Aorta (tissue), 5 donors: ENCODE measurements at regions of chr5 and their contacts with region 1.

Region 1: DNA sequence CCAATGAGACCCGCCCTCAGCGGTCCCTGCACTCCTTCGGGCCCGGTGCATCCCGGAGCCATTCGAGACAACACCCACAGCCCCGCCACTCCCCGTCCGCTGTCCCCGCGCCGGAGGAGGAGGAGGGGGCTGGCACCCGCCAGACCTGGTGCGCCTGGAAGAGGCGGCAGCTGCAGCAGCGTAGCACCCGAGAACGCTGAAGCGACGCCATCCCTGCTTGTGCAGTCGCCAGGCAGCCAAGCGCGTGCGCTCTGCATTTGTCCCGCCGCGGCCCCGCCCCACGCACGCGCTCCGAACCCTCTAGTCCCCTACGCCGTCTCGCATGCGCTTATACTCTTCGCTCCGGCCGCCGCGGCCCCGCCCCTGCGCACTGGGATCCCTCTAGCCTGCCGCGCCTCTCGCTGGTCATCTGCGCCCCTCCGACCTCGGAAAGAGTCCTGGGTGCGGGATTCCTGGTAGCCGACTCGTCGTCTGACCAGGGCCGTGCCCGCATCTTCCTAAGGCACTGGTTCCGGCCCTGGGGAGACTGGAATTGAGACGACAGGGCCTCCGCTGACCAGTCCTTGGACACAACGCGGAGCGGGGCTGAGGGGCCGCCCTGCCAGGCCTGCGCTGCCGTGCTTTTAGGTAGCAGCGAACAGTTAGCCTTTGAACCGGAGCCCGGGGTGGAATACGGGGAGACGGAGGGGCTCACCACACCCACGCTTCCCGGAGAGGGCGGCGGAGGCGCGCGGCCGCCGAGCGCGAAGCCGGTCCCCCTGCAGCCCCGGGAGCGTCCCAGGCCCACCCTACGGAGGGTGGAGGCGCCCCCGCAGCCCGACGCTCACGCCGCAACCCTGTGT is at the start of gene MRNIP:
- DNase-seq: peak; percentile 99 to 100
- ATAC-seq: peak; percentile 99
- H3K4me3 ChIP-seq: peak within 1 kb of the TSS; percentile 53
- H3K27ac ChIP-seq: peak within 1 kb of the TSS in 1 of 2 donors; percentile 62
- H3K4me1 ChIP-seq: no peaks in the 10 kb centered on the region
- H3K27me3 ChIP-seq: no peaks in the 10 kb centered on the region
- total RNA-seq, gene MRNIP: 22.9 to 46.6 TPM

Region 2: GRCh38 chr5:179806250-179807222 is 52.3 kb before region 1 on chr5 and contains the start of gene MGAT4B:
- intact Hi-C with region 1: loop called in 1 of 2 experiments (anchors 10 kb)
- DNase-seq: peak; percentile 87 to 91
- ATAC-seq: peak; percentile 92
- H3K4me3 ChIP-seq: peak within 1 kb of the TSS; percentile 98
- H3K27ac ChIP-seq: peak within 1 kb of the TSS; percentile 68 to 79
- H3K4me1 ChIP-seq: peaks cover 0 to 2% of the 10 kb centered on the region in 2 donors
- H3K27me3 ChIP-seq: no peaks in the 10 kb centered on the region
- total RNA-seq, gene MGAT4B: 56.0 to 78.8 TPM

Region 3: DNA sequence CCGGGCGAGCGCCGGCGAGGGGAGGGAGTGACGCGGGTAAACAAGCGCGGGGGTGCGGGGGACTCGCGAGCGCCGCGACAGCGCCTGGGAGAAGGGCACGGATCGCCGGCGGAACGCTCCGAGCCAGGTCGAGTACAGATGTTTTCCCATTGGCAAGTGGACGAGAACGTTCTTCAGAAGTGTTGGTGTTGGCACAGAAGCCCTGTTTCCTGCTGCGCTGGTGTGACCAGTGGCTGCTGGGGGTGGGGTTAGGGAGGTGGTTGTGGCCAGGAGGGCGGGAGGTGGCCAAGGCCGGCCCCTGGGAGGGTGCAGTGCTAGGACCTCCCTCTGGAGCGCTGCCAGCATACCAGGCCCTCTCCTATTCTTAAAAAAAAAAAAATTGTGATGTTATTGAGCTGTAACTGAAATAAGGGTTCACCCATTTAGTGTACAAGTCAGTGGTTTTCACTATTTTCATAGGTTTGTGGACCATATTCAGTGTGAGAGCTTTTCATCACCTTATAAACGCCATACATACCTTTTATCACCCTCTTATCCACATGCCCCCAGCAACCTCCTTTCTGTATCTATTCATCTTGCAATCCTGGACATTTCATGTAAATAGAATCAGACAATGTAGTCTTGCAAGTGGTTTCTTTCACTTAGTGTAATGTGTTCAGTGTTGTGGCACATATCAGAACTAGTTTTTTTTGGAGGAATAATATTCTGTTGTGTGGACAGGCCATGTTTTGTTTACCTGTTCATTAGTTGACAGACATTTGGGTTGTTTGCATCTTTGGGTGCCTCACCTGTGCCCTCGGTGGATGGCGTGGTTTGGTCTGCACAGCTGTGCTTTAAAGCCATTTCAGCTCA is 37.0 kb before region 1 on chr5:
- intact Hi-C with region 1: loop called (anchors 5 kb)
- DNase-seq: peak; percentile 98
- ATAC-seq: peak; percentile 88
- H3K4me3 ChIP-seq: peak overlapping the region; percentile 49 to 96
- H3K27ac ChIP-seq: peak overlapping the region; percentile 92 to 96
- H3K4me1 ChIP-seq: no peaks in the 10 kb centered on the region
- H3K27me3 ChIP-seq: peaks cover 0 to 1% of the 10 kb centered on the region in 2 donors